A549 (cell line): ENCODE measurements at regions of chr15 and their contacts with region 1.

Region 1: GRCh38 chr15:84588053-84588874 is 12.5 kb upstream of the ZSCAN2 start:
- DNase-seq: peak; percentile 93 to 98
- ATAC-seq: peak; percentile 99 to 100
- H3K4me3 ChIP-seq: peak overlapping the region; percentile 33
- H3K27ac ChIP-seq: peak overlapping the region; percentile 66 to 82
- H3K4me1 ChIP-seq: peaks cover 9% of the 10 kb centered on the region; the same call in 2 of the 3 replicates
- CTCF ChIP-seq: peak; percentile 97
- EP300 ChIP-seq: no peak
- POLR2A ChIP-seq: no peak
- RAD21 ChIP-seq: peak; percentile 90 to 99

Region 2: DNA sequence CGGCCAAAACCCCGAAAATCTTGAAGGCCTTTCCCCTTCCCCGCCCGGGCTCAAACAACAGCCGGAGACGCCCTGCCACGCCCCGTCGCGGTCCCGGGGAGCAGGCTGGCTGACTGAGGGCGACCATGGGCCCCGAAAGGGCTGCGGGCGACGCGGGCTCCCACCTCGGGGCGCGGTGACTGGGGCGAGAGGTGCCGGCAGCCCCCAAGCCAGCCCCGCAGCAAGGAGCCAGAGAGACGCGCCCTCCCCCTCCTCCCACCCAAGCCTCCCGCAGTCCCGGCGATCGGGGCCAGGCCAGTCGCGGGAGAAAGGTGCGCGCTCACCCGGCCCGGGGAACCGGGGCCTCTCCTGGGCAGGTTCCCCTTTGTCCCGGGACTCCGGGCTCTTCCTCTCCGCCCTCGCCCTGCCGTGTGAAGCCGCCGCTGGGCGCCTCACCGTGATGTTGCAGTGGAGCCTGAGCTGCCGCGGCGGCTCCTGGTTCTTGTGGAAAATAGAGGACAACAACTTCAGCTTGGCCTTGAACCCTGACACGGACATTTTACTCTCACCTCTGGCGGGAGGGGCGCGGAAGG is 18.0 kb before region 1 on chr15:
- CTCF ChIA-PET with region 1: interaction called, 162 read pairs
- POLR2A ChIA-PET with region 1: no interaction called
- DNase-seq: peak; percentile 44 to 48
- ATAC-seq: peak; percentile 78 to 79
- H3K4me3 ChIP-seq: peak overlapping the region; percentile 93
- H3K27ac ChIP-seq: peak overlapping the region; percentile 91 to 96
- H3K4me1 ChIP-seq: peaks cover 5% of the 10 kb centered on the region
- CTCF ChIP-seq: no peak
- EP300 ChIP-seq: no peak
- POLR2A ChIP-seq: peak; percentile 35; the same call in 1 of the 2 replicates
- RAD21 ChIP-seq: no peak

Region 3: GRCh38 chr15:84609818-84610525 is 21.7 kb after region 1 on chr15:
- CTCF ChIA-PET with region 1: interaction called, 13 read pairs
- POLR2A ChIA-PET with region 1: no interaction called
- DNase-seq: no peak
- ATAC-seq: no peak
- H3K4me3 ChIP-seq: no peak overlapping the region
- H3K27ac ChIP-seq: no peak overlapping the region
- H3K4me1 ChIP-seq: peaks cover 26% of the 10 kb centered on the region
- CTCF ChIP-seq: no peak
- EP300 ChIP-seq: no peak
- POLR2A ChIP-seq: no peak
- RAD21 ChIP-seq: no peak

Region 4: DNA sequence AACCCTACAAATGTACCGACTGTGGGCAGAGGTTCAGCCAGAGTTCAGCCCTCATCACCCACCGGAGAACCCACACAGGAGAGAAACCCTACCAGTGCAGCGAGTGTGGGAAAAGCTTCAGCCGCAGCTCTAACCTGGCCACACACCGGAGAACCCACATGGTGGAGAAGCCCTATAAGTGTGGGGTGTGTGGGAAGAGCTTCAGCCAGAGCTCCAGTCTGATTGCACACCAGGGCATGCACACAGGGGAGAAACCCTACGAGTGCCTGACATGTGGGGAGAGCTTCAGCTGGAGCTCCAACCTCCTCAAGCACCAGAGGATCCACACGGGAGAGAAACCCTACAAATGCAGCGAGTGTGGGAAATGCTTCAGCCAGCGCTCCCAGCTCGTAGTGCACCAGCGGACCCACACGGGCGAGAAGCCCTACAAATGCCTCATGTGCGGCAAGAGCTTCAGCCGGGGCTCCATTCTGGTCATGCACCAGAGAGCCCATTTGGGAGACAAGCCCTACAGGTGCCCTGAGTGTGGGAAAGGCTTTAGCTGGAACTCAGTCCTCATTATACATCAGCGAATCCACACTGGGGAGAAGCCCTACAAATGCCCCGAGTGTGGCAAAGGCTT is 33.2 kb after region 1 on chr15:
- CTCF ChIA-PET with region 1: interaction called, 19 read pairs
- POLR2A ChIA-PET with region 1: no interaction called
- DNase-seq: no peak
- ATAC-seq: no peak
- H3K4me3 ChIP-seq: no peak overlapping the region
- H3K27ac ChIP-seq: no peak overlapping the region
- H3K4me1 ChIP-seq: no peaks in the 10 kb centered on the region
- CTCF ChIP-seq: no peak
- EP300 ChIP-seq: no peak
- POLR2A ChIP-seq: no peak
- RAD21 ChIP-seq: no peak

Region 5: GRCh38 chr15:84658080-84658787 is 70.0 kb after region 1 on chr15 and contains the start of gene NMB:
- CTCF ChIA-PET with region 1: interaction called, 18 read pairs
- POLR2A ChIA-PET with region 1: interaction called, 9 read pairs
- DNase-seq: peak; percentile 89 to 99
- ATAC-seq: peak; percentile 78 to 85
- H3K4me3 ChIP-seq: peak within 1 kb of the TSS; percentile 47
- H3K27ac ChIP-seq: peak within 1 kb of the TSS; percentile 83 to 88
- H3K4me1 ChIP-seq: peaks cover 29% of the 10 kb centered on the region
- CTCF ChIP-seq: peak; percentile 83
- EP300 ChIP-seq: no peak
- POLR2A ChIP-seq: peak; percentile 26
- RAD21 ChIP-seq: peak; percentile 38 to 73
- polyA plus RNA-seq, gene NMB: 10.1 and 16.1 TPM in 2 replicates

Region 6: DNA sequence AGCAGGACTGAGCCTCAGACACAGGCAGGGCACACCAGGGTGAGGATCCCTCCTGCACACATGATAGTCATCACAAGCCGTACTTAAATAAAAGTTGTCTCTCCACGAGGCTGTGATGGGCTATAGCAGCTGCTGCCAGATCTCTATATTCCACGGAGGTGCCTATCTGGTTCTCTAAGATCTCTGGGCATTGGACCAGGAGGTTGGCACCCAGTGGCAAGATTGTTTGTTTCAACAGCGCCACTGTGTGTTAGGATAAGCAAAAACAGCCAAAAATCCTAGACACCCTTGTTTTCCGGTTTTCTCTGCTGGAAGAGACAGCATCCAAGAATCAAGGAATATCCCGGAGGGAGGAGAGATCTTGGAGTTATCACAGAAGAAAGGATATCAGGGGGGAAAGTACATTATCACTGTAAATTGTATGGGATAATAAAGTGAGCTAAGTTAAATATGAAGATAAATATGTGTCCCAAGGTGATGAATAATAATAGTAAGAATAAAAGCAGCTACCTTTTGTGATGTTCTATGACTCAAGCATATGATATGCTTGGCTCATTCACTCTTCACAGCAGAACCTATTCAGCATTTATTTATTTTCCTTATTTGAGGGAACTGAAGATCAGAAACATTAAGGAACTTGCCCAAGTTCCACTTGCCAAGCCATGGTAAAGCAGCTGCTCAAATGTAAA is 701.6 kb after region 1 on chr15:
- CTCF ChIA-PET with region 1: interaction called, 11 read pairs
- POLR2A ChIA-PET with region 1: no interaction called
- DNase-seq: peak; percentile 71 to 96
- ATAC-seq: peak; percentile 85 to 89
- H3K4me3 ChIP-seq: no peak overlapping the region
- H3K27ac ChIP-seq: no peak overlapping the region
- H3K4me1 ChIP-seq: peaks cover 6% of the 10 kb centered on the region; the same call in 1 of the 3 replicates
- CTCF ChIP-seq: peak; percentile 87
- EP300 ChIP-seq: no peak
- POLR2A ChIP-seq: no peak
- RAD21 ChIP-seq: peak; percentile 83 to 88

Region 7: GRCh38 chr15:85456798-85457197 is 868.5 kb after region 1 on chr15:
- CTCF ChIA-PET with region 1: no interaction called
- POLR2A ChIA-PET with region 1: no interaction called
- DNase-seq: no peak
- ATAC-seq: no peak
- H3K4me3 ChIP-seq: no peak overlapping the region
- H3K27ac ChIP-seq: no peak overlapping the region
- H3K4me1 ChIP-seq: peaks cover 66% of the 10 kb centered on the region
- CTCF ChIP-seq: no peak
- EP300 ChIP-seq: no peak
- POLR2A ChIP-seq: no peak
- RAD21 ChIP-seq: no peak